OCI-LY7 (cell line): ENCODE measurements at regions of chr1 and their contacts with region 1.

Region 1: DNA sequence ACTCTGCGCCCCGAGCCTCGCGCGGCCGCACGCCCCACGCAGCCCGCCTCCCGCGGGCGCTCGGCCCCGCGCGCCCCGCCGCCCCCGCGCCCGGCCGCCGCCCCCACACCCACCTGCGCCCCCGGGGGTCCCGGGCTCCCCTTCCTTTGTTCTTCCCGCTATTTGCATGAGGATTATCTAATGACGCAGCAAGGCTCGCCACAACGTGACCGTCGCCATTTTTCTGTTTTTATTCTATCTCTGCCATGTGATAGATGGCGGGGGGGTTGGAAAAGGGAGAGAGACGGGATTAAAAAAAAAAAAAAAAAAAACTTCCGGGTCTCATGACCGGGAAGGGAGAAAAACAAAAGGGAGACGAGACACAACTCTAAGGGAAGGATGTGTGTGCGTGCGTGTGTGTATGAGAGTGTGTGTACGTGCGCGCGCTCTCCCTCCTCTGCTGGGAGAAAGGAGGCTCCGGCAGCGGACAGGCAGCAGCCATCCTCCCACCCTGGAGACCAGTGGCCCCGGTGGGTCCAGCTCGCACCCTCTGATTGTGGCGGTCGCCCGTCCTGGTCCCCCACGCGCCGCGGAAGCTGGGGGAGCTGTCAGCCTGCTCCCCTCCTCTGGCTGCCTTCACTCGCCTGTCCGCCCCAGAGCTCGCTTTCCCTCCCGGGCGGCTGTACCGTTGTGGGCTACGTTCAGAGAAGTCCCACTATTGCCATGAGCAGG is 80.4 kb upstream of the AK4 start:
- DNase-seq: peak; percentile 80
- H3K4me3 ChIP-seq: peak overlapping the region; percentile 85
- H3K27ac ChIP-seq: peak overlapping the region; percentile 55
- H3K4me1 ChIP-seq: peaks cover 32% of the 10 kb centered on the region
- CTCF ChIP-seq: no peak

Region 2: DNA sequence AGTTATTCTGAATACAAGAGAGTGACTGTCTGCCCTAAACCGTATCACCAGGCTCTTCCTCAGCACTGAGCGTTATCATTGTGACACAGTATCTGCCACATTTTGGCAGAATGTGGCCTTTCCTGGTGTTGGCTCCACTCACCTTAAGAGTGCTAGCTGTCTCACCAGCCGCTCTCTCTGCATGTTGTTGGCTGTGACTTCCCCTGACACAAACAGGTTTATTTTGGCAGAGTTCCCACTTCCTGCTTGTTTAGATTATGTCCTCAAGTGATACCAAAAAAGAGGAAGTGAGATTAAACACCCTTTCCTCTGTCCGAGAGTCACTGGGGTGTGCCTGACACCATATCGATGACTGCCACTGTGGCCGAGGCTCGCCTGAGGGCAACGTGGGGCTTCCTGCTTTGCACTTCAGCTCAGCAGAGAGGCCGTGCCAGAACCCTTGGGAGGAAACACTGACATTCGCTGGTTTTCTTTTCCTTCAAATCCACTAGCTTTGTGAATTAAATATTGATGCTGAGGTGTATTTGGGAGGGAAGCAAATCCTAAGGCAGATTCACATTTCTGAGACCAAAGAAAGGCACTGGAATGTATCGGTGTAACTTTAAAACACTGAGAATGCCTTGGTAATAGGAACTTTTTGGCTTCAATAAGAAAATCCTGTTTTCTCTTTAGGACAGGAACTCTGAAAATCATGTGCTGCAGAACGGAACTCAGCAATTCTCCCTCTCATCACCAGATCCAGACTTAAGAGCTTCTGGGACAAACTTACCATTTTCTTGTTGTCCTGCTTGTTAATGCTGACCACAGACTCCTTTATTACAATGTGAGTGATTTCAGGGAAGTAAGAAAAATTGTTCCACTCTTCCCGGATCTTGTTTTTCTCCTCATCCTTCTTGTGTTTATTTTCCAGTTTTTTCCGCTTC is 203.4 kb before region 1 on chr1:
- CTCF ChIA-PET with region 1: no interaction called
- POLR2A ChIA-PET with region 1: interaction called, 7 read pairs
- intact Hi-C with region 1: loop called (anchors 2 kb)
- DNase-seq: peak; percentile 97
- H3K4me3 ChIP-seq: peak overlapping the region; percentile 44
- H3K27ac ChIP-seq: peak overlapping the region; percentile 80
- H3K4me1 ChIP-seq: peaks cover 51% of the 10 kb centered on the region
- CTCF ChIP-seq: 0 out of 2 replicates have a peak, but pooled peaks have one; percentile 10

Region 3: DNA sequence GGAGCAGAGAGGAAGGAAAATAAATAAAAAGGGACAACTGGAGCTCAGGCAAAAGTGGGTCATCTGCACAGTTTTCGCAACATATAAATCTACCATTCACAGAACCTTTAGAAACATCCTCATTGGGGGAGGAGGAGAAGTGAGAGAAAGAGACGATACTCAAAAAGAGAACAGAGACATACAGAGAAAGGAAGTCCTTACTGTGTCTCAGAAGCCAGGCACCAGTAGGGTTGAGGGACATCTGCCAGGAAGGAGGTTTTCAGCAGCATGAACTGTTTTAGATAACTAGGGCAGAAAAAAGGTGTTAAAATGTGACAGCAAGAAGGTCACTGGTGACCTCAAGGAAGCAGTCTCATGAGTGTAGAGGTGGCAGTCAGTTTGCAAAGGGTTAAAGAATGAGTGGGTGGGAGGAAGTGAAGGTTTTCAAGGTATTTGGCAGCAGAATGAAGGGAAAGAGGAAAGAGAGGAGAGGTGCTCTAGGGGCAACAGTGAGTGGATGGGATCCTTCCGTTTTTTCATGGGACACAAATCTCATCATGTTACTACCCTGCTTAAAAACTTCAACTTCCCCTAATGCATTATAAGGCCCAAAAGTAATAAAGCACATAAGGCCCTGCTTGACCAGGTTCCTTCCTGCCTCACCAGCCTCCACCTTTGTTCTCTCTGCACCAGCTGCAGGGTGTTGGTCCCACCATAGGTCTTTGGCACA is 110.8 kb before region 1 on chr1:
- CTCF ChIA-PET with region 1: no interaction called
- POLR2A ChIA-PET with region 1: interaction called, 4 read pairs
- intact Hi-C with region 1: loop called (anchors 5 kb)
- DNase-seq: peak; percentile 86
- H3K4me3 ChIP-seq: peak overlapping the region; percentile 49
- H3K27ac ChIP-seq: peak overlapping the region; percentile 93
- H3K4me1 ChIP-seq: peaks cover 100% of the 10 kb centered on the region
- CTCF ChIP-seq: no peak

Region 4: DNA sequence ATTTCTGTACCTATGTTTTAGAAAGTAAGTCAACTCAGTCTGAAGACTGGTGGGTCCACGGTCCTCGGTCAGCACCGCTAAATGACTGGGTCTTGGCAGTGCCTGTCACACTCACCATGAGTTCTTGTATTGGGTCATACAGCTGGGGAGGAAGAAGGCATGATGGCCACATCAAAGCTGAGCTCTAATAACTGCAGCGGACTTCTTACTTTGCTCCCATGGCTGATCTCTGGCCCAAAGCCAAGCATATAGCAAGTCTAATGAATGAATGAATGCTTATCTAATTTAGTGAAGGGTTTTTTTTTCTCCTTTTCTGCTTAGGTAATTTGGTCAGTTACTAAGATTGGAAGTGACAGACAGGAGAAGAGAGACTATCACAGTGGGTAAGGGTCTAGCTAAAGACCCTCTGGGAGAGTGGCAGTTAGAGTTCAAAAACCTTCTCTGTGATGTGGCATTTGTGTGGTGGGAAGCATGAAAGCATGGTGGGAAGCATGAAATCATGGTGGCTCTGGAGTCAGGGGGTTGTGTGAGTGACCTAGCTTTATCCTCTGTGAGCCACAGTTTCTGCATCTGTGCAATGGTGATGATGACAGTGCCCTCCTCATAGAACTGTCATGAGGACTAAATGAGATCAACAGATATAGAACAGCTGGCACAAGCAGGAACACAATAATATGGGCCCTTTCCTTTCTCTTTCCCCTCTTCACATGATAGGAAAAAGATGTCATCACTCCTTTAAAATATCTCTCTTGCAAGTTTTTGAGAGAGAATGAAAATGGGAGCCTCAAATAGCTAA is 22.4 kb before region 1 on chr1:
- CTCF ChIA-PET with region 1: interaction called, 3 read pairs
- POLR2A ChIA-PET with region 1: interaction called, 16 read pairs
- intact Hi-C with region 1: loop called (anchors 2 kb)
- DNase-seq: peak; percentile 53
- H3K4me3 ChIP-seq: peak overlapping the region; percentile 29
- H3K27ac ChIP-seq: peak overlapping the region; percentile 70
- H3K4me1 ChIP-seq: peaks cover 41% of the 10 kb centered on the region
- CTCF ChIP-seq: no peak

Region 5: GRCh38 chr1:65097076-65097475 is 29.4 kb after region 1 on chr1:
- CTCF ChIA-PET with region 1: no interaction called
- POLR2A ChIA-PET with region 1: no interaction called
- intact Hi-C with region 1: no loop called
- DNase-seq: no peak
- H3K4me3 ChIP-seq: no peak overlapping the region
- H3K27ac ChIP-seq: no peak overlapping the region
- H3K4me1 ChIP-seq: no peaks in the 10 kb centered on the region
- CTCF ChIP-seq: no peak

Region 6: DNA sequence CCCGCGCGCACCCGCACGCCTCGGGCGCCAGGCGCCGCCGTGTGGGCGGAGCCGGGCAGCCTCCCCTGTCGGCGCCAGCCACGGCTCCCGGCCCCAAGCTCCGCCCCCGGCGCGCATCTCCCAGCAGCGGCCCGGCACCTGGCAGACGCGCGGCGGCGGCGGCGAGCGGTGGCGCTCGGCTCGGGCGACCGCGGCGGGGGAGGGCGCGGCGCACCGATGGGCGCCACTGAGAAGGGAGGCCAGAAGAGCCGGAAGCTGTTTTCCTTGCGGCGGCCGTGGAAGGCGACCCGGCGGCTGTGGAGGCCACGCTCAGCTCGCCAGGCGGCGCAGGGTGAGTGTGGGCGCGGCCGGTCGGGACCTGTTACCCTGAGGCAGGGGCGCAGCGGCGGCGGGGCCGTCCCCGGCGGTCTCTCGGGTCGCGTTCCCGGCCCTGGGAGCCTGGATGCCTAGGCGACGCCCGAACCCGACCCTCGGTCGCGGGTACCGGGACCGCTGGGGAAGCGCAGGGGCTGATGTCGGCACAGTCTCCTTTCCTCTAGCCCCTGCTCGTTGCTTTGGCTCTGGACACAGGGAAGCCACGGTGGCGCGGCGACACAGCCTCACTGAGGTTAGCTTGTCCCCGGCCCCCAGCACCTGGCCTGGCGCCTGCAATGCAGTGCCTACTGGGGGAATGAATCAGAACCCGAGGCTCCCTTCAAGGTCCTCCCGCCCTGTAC is 186.8 kb after region 1 on chr1:
- CTCF ChIA-PET with region 1: no interaction called
- POLR2A ChIA-PET with region 1: interaction called, 6 read pairs
- intact Hi-C with region 1: loop called (anchors 5 kb)
- DNase-seq: peak; percentile 91
- H3K4me3 ChIP-seq: peak overlapping the region; percentile 86
- H3K27ac ChIP-seq: peak overlapping the region; percentile 47
- H3K4me1 ChIP-seq: peaks cover 21% of the 10 kb centered on the region
- CTCF ChIP-seq: 0 out of 2 replicates have a peak, but pooled peaks have one; percentile 11

Region 7: GRCh38 chr1:65419681-65420589 is 352.3 kb after region 1 on chr1:
- CTCF ChIA-PET with region 1: no interaction called
- POLR2A ChIA-PET with region 1: no interaction called
- intact Hi-C with region 1: loop called (anchors 5 kb)
- DNase-seq: peak; percentile 97
- H3K4me3 ChIP-seq: peak overlapping the region; percentile 92
- H3K27ac ChIP-seq: peak overlapping the region; percentile 63
- H3K4me1 ChIP-seq: peaks cover 20% of the 10 kb centered on the region
- CTCF ChIP-seq: no peak